Naive thymus-derived CD4-positive, alpha-beta T cell (primary cell): ENCODE measurements at regions of chr5 and their contacts with region 1.

Region 1: GRCh38 chr5:108748401-108749127 is 867 bp downstream of the FER start:
- DNase-seq: peak; percentile 92 to 99 (median 98)
- ATAC-seq: peak; percentile 94
- H3K4me3 ChIP-seq: peak overlapping the region; percentile 91
- H3K4me3 Mint-ChIP-seq: peak overlapping the region; percentile 83 to 100 (median 93)
- H3K27ac ChIP-seq: peak overlapping the region; percentile 94
- H3K27ac Mint-ChIP-seq: peak overlapping the region; percentile 78 to 98 (median 93)
- H3K4me1 ChIP-seq: peaks cover 10 to 12% of the 10 kb centered on the region in 2 donors
- H3K4me1 Mint-ChIP-seq: peaks cover 9 to 26% (median 13%) of the 10 kb centered on the region in 7 donors
- H3K27me3 ChIP-seq: no peaks in the 10 kb centered on the region
- H3K27me3 Mint-ChIP-seq: peaks cover 0 to 52% (median 0%) of the 10 kb centered on the region in 5 donors

Region 2: DNA sequence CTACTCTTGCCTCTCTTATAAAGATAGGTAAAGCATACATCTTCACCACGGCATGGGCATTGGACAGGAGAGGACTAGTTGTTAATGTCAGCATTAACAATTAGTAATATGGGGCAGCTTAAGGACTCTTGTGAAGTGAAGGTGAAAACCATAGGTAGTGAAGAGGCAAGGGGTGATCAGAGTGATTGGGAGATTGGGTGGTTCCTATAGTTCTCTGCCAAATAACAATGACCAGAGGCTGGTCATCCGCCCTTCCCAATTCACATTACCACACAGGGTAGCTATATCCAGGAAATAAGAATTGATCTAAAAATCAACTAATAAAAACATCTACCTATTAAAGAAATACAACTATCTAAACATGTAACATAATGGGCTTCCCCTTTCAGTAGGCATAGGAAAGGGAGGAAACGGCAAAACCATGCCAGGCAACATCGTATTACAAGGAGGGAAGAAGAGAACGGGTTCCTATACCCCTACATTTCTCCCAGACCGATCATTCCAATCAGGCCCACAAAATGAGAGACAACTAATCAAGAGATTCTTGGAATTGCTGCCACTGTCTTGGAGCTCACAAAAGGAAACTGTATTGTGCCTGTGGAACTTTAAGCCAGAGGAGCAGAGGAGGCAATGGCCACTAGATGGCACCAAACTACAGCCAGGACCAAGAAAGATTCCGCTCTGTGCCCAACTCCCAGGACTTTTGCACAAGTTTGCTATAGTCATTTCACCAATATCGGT is 488.3 kb before region 1 on chr5:
- CTCF ChIA-PET with region 1: no interaction called
- POLR2A ChIA-PET with region 1: no interaction called
- intact Hi-C with region 1: loop called in 1 of 2 experiments (anchors 5 kb)
- DNase-seq: peak; percentile 22 to 62 (median 52)
- ATAC-seq: peak; percentile 81
- H3K4me3 ChIP-seq: no peak overlapping the region
- H3K4me3 Mint-ChIP-seq: peak overlapping the region in 4 of 10 donors; percentile 49 to 63 (median 56)
- H3K27ac ChIP-seq: no peak overlapping the region
- H3K27ac Mint-ChIP-seq: peak overlapping the region in 2 of 9 donors; percentile 19
- H3K4me1 ChIP-seq: no peaks in the 10 kb centered on the region
- H3K4me1 Mint-ChIP-seq: peaks cover 5 to 18% (median 8%) of the 10 kb centered on the region in 7 donors
- H3K27me3 ChIP-seq: no peaks in the 10 kb centered on the region
- H3K27me3 Mint-ChIP-seq: no peaks in the 10 kb centered on the region

Region 3: DNA sequence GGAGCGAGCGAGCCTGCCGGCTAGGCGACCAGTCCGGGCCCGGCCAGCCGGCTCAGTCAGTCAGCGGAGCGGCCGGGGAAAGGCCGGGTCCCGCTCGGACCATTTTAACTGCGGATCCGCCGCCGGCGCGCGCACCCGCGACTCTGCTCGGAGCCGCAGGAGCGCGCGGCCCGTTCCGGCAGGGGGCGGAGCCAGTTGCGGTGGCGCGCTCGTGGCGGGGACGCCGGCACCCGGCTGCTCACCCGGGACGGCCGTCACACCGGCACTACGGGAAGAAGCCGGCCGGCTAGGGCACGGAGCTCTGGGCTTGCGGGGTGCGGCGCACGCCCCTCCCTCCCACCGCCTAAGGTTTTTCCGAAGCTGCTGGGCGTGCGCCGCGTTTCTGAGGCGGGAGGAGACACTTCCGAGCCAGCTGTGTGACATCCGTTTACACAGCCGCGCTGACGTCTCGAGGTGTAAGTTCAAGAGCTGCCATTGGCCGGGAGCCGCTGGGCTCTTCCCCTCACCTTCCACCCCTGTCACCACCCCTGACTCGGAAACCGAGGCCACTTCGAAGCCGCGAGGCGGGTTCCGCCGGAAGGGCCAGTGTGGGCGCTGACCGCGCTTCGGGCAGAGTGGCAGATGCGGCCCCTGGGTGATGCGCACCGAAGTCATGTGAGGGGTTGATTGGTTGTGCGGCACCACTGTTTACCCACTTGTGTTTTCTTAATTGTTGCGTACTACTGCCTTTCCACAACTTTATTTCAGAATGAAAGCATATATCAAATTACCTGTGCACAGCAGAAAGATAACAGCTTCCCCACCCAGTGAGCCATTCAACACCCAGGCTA is 366.4 kb before region 1 on chr5 and contains the start of gene FBXL17:
- CTCF ChIA-PET with region 1: no interaction called
- POLR2A ChIA-PET with region 1: no interaction called
- intact Hi-C with region 1: loop called (anchors 1 kb)
- DNase-seq: peak; percentile 86 to 95 (median 92)
- ATAC-seq: peak; percentile 89
- H3K4me3 ChIP-seq: peak within 1 kb of the TSS; percentile 90
- H3K4me3 Mint-ChIP-seq: peak within 1 kb of the TSS; percentile 80 to 99 (median 91)
- H3K27ac ChIP-seq: peak within 1 kb of the TSS; percentile 88
- H3K27ac Mint-ChIP-seq: peak within 1 kb of the TSS; percentile 90 to 99 (median 97)
- H3K4me1 ChIP-seq: peaks cover 8 to 17% of the 10 kb centered on the region in 2 donors
- H3K4me1 Mint-ChIP-seq: peaks cover 19 to 52% (median 44%) of the 10 kb centered on the region in 7 donors
- H3K27me3 ChIP-seq: no peaks in the 10 kb centered on the region
- H3K27me3 Mint-ChIP-seq: no peaks in the 10 kb centered on the region
- total RNA-seq, gene FBXL17: 14.2 to 28.4 (median 21.7) TPM

Region 4: DNA sequence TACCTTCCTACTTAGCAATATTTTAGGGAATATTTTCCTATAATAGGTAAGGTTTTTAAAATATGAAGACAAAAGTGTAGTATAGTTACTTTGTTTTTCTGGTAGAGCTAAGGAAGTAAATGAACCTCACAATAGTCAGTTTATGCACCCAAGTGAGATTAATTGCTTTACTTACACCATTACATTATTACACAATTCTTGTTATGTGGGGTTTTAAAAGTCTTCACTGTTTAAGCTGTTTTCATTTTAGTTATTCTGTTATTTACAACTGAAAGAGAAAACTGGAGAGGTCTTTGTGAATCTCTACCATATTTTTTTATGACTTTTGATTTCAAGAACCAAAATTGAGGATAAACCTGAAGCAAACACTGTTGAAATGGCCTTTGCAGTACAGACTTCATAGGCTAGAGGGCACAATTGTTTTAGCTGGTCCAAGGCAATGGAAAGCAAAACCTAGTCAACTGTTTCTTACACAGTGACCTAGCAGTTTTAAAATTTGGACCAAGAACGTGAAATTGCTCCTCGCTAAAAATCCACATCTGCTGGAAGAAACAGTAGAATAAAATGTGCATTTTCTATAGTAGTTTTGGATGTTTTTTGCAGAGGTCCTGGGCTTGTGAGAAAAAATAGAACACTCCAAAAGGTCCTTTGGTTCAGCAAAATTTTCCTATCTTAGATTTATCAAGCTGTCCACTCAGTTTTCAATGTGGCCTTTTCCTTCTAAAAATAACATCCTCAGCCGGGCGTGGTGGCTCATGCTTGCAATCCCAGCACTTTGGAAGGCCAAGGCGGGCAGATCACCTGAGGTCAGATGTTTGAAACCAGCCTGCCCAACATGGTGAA is 67.3 kb before region 1 on chr5:
- CTCF ChIA-PET with region 1: no interaction called
- POLR2A ChIA-PET with region 1: no interaction called
- intact Hi-C with region 1: loop called in 1 of 2 experiments (anchors 1 kb)
- DNase-seq: peak in 6 of 9 donors; percentile 23 to 58 (median 44)
- ATAC-seq: peak; percentile 88
- H3K4me3 ChIP-seq: no peak overlapping the region
- H3K4me3 Mint-ChIP-seq: no peak overlapping the region
- H3K27ac ChIP-seq: no peak overlapping the region
- H3K27ac Mint-ChIP-seq: no peak overlapping the region
- H3K4me1 ChIP-seq: no peaks in the 10 kb centered on the region
- H3K4me1 Mint-ChIP-seq: no peaks in the 10 kb centered on the region
- H3K27me3 ChIP-seq: no peaks in the 10 kb centered on the region
- H3K27me3 Mint-ChIP-seq: peaks cover 0 to 9% (median 0%) of the 10 kb centered on the region in 5 donors

Region 5: GRCh38 chr5:108727651-108728565 is 20.7 kb before region 1 on chr5:
- CTCF ChIA-PET with region 1: no interaction called
- POLR2A ChIA-PET with region 1: interaction called, 6 read pairs
- intact Hi-C with region 1: loop called (anchors 1 to 2 kb)
- DNase-seq: peak; percentile 16 to 47 (median 30)
- ATAC-seq: peak; percentile 86
- H3K4me3 ChIP-seq: peak overlapping the region; percentile 79
- H3K4me3 Mint-ChIP-seq: peak overlapping the region; percentile 62 to 94 (median 87)
- H3K27ac ChIP-seq: peak overlapping the region; percentile 60
- H3K27ac Mint-ChIP-seq: peak overlapping the region; percentile 10 to 92 (median 70)
- H3K4me1 ChIP-seq: peaks cover 6 to 8% of the 10 kb centered on the region in 2 donors
- H3K4me1 Mint-ChIP-seq: peaks cover 11 to 26% (median 20%) of the 10 kb centered on the region in 7 donors
- H3K27me3 ChIP-seq: peaks cover 0 to 2% of the 10 kb centered on the region in 2 donors
- H3K27me3 Mint-ChIP-seq: peaks cover 16 to 73% (median 22%) of the 10 kb centered on the region in 5 donors

Region 6: DNA sequence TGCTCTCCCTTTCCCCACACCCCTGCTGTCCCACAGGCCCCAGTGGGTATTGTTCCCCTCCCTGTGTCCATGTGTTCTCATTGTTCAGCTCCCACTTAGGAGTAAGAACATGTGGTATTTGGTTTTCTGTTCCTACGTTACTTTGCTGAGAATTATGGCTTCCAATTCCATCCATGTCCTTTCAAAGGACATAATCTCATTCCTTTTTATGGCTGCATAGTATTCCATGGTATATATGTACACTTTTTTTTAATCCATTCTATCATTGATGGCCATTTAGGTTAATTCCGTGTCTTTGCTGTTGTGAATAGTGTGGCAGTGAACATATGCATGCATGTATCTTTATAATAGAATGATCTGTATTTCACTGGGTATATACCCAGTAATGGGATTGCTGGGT is 24.8 kb after region 1 on chr5:
- CTCF ChIA-PET with region 1: no interaction called
- POLR2A ChIA-PET with region 1: no interaction called
- intact Hi-C with region 1: no loop called
- DNase-seq: no peak
- ATAC-seq: no peak
- H3K4me3 ChIP-seq: no peak overlapping the region
- H3K4me3 Mint-ChIP-seq: no peak overlapping the region
- H3K27ac ChIP-seq: no peak overlapping the region
- H3K27ac Mint-ChIP-seq: no peak overlapping the region
- H3K4me1 ChIP-seq: no peaks in the 10 kb centered on the region
- H3K4me1 Mint-ChIP-seq: peaks cover 5 to 16% (median 7%) of the 10 kb centered on the region in 7 donors
- H3K27me3 ChIP-seq: no peaks in the 10 kb centered on the region
- H3K27me3 Mint-ChIP-seq: no peaks in the 10 kb centered on the region

Region 7: GRCh38 chr5:110054240-110054639 is 1305.7 kb after region 1 on chr5:
- CTCF ChIA-PET with region 1: no interaction called
- POLR2A ChIA-PET with region 1: no interaction called
- intact Hi-C with region 1: loop called in 1 of 2 experiments (anchors 10 kb)
- DNase-seq: peak; percentile 17 to 93 (median 85)
- ATAC-seq: peak; percentile 89
- H3K4me3 ChIP-seq: peak overlapping the region; percentile 6
- H3K4me3 Mint-ChIP-seq: peak overlapping the region; percentile 50 to 86 (median 65)
- H3K27ac ChIP-seq: peak overlapping the region; percentile 63
- H3K27ac Mint-ChIP-seq: peak overlapping the region; percentile 77 to 96 (median 90)
- H3K4me1 ChIP-seq: peaks cover 21 to 35% of the 10 kb centered on the region in 2 donors
- H3K4me1 Mint-ChIP-seq: peaks cover 10 to 50% (median 35%) of the 10 kb centered on the region in 7 donors
- H3K27me3 ChIP-seq: no peaks in the 10 kb centered on the region
- H3K27me3 Mint-ChIP-seq: no peaks in the 10 kb centered on the region

Region 8: GRCh38 chr5:110726249-110727024 is 1977.9 kb after region 1 on chr5 and contains the start of gene TMEM232:
- CTCF ChIA-PET with region 1: no interaction called
- POLR2A ChIA-PET with region 1: no interaction called
- intact Hi-C with region 1: loop called in 1 of 2 experiments (anchors 2 kb)
- DNase-seq: peak; percentile 40 to 85 (median 65)
- ATAC-seq: peak; percentile 99
- H3K4me3 ChIP-seq: peak within 1 kb of the TSS; percentile 59
- H3K4me3 Mint-ChIP-seq: peak within 1 kb of the TSS; percentile 73 to 97 (median 86)
- H3K27ac ChIP-seq: peak within 1 kb of the TSS; percentile 37
- H3K27ac Mint-ChIP-seq: peak within 1 kb of the TSS in 7 of 9 donors; percentile 15 to 79 (median 65)
- H3K4me1 ChIP-seq: no peaks in the 10 kb centered on the region
- H3K4me1 Mint-ChIP-seq: peaks cover 0 to 8% (median 0%) of the 10 kb centered on the region in 7 donors
- H3K27me3 ChIP-seq: no peaks in the 10 kb centered on the region
- H3K27me3 Mint-ChIP-seq: peaks cover 0 to 3% (median 0%) of the 10 kb centered on the region in 5 donors
- total RNA-seq, gene TMEM232: 1.6 to 3.0 (median 2.9) TPM